H1 (cell line): ENCODE measurements at regions of chr12 and their contacts with region 1.

Region 1: DNA sequence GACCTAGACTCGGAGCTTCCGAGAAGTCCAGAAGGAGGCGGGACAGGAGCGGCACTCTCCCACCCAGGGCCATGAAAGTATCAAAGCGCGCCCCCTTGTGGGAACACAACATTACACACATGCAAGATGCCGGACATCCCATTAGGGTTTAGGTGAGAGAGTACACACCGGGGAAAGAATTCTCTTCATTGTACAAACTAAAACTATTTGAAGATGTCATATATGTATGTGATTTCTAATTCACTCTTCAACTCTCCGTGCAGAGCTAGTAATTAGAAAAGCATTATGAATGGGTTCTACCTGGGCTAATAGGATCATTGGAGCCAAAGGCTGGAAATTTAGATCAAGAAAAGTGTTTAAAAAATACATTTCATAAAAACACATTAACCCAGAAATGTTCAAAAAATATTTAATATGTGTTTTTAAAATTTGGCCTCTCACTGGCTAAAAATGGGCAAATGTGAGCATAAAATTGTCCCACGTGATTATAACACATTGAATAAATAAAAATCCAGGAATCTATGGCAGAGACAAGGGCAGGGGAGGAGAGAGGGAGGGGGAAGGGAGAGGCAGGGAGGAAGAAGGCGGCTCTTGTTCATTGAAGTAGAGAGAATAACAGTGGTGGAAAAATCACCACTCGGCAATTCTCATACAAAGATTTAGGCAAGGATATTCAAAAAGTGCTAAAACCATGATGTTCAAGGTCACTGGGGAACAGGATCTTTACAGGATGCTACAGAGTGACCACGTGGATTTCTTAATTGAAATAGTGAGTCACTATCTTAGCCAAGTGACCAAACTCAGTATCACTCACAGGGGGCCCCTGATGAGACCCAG is 38.9 kb downstream of the FBXO21 start:
- DNase-seq: peak; percentile 44 to 90
- H3K4me3 ChIP-seq: no peak overlapping the region
- H3K27ac ChIP-seq: no peak overlapping the region
- H3K4me1 ChIP-seq: peaks cover 4% of the 10 kb centered on the region in 4 experiments; a peak in 6 of 7 replicates
- H3K27me3 ChIP-seq: no peaks in the 10 kb centered on the region
- CTCF ChIP-seq: peak; percentile 72 to 81 (median 79)
- EP300 ChIP-seq: no peak
- POLR2A ChIP-seq: no peak
- RAD21 ChIP-seq: peak; percentile 47 to 53

Region 2: GRCh38 chr12:117127933-117128823 is 23.2 kb before region 1 on chr12:
- CTCF ChIA-PET with region 1: interaction called, 15 read pairs
- POLR2A ChIA-PET with region 1: no interaction called
- DNase-seq: no peak
- H3K4me3 ChIP-seq: no peak overlapping the region
- H3K27ac ChIP-seq: no peak overlapping the region
- H3K4me1 ChIP-seq: no peaks in the 10 kb centered on the region
- H3K27me3 ChIP-seq: no peaks in the 10 kb centered on the region
- CTCF ChIP-seq: no peak
- EP300 ChIP-seq: no peak
- POLR2A ChIP-seq: no peak
- RAD21 ChIP-seq: no peak

Region 3: GRCh38 chr12:117134059-117134458 is 17.4 kb before region 1 on chr12:
- CTCF ChIA-PET with region 1: interaction called, 16 read pairs
- POLR2A ChIA-PET with region 1: interaction called, 4 read pairs
- DNase-seq: no peak
- H3K4me3 ChIP-seq: no peak overlapping the region
- H3K27ac ChIP-seq: no peak overlapping the region
- H3K4me1 ChIP-seq: no peaks in the 10 kb centered on the region
- H3K27me3 ChIP-seq: no peaks in the 10 kb centered on the region
- CTCF ChIP-seq: no peak
- EP300 ChIP-seq: no peak
- POLR2A ChIP-seq: no peak
- RAD21 ChIP-seq: no peak